ENCODE measurements at regions of chr2 and their contacts with region 1.

Region 1: DNA sequence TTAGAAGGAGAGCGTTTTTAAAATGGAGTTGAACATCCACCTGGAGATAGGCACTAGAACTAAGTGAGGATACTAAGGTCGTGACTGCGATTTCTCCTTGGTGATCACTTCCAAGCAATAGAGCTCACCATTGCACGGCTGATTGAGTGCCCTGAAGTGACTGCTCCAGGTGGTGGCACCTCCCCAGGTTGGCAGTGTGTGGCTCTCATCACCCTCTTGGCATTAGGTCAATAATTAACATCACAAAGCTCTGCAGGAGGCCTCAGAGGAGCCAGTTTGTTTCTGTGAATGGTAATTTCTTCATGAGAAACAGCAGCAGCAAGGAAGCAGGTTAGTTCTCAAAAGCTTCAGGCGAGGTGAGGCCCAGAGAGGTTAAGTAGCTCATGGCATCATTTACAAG is 259.6 kb downstream of the CLIP4 start:
- DNase-seq: no peak
- H3K4me3 ChIP-seq: no peak overlapping the region
- CTCF ChIP-seq: no peak

Region 2: DNA sequence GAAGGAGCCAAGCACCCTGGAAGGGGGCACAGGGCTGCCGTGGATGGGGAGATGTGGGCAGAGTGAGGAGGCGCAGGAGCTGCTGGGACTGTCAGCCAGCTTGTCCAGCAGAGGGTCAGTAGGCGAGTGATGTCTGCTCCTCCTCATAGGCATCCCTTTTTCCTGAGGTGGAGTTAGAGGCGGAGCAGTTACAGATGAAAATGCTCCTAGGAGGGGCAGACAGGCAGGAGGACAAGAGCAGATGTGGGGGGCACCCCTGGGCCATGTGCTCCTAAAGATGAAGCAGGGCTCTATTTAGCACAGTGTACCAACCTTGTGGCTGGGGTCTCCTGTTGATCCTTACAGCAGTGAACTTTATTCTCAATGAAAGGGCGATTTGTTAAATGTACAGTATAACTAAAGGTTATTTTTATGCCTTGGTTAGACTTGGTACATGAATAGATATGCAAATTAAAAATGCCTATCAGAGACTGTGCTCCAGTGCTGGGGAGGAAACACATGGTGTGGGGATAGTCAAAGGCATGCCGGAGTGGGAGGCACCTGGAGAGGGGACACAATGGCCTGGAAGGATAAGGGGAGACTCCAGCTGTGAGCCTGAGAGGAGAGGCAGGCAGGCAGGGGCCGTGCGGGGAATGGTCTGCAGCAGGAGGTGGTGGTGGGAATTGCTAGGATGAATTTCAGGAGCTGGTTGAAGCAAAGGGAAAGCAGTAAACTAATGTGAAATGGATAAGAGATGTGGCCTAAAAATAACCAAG is 84.4 kb before region 1 on chr2:
- in situ Hi-C with region 1: no loop called
- DNase-seq: no peak
- H3K4me3 ChIP-seq: no peak overlapping the region
- CTCF ChIP-seq: no peak

Region 3: DNA sequence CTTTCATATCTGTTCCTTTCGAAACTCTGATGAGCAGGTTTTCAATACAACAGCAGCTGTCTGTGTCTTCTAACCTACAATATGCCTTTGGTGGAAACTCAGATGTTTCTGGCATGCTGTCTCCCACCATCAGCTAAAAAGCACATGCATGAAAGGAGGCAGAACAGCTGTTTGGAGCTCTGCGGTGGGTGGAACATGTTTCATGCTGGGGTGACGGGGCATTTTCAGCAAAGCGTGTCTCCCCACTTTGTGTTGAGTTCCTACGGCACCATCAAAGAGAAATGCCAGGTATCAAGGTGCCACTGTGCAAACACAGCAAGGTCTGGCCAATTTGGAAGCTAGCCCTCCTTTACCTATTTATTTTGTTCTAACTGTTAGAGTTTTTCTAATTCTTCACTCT is 30.4 kb after region 1 on chr2:
- in situ Hi-C with region 1: no loop called
- DNase-seq: no peak
- H3K4me3 ChIP-seq: no peak overlapping the region
- CTCF ChIP-seq: no peak

Region 4: DNA sequence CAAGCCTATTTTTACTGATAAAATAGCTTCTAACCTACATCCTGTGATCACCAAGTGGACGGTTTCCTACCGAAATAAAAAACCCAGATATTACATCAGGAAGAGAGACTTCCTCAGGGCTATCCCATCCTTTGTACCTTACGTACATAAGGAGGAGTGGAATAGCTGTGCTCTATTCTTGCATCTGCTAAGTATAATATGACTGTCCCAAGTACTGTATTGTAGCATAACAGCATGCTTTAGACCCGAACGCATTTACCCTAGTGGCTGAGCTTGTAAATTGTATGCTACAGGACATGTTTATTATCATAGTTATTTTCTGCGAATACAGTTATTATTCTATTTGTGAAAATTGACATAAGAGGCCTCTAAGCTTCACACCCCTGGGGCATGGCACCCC is 42.8 kb after region 1 on chr2:
- in situ Hi-C with region 1: loop called (anchors 5 kb)
- DNase-seq: no peak
- H3K4me3 ChIP-seq: no peak overlapping the region
- CTCF ChIP-seq: no peak

Measured in astrocyte of the cerebellum (primary cell).